ENCODE measurements at regions of chr10 and their contacts with region 1.

Region 1: DNA sequence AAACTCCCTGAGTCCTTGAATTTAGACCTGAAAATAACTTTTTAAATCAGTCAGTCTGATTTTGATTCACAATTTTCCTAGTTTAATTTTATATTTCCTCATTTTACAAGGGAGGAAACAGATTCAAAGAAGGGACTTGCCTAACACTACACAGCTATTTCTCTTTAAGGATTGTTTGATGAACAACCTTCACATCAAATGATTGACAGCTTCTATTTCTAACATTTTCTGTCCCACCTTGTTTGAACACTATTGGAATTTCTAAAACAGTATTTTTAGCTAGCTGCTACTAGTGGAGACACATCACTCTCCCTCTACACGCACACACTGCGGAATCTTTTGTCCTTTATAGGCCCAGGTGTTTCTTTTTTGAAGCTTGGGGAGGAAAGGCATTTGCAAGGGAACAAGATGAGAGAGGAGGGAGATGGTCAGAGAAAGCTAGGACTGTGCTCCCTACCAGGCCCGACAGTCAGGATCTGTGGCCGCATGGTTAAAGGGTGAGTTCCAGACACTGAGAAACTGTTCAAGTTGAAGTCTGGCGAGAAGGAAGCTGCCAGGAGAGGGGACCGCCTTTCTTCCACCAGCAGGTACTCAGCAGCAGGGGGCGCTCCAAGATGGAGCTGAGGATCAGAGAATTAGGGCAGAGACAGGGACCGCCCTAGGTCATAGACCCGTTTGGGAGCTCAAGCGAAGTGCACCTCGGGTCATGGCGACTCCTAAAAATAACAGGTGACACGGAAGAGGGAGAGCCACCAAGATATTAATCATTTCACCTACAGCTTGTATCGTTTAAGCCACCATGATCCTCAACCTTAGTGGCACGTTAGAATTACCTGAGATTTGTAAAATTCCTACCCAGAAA is 49.7 kb downstream of the DNAJC12 start:
- DNase-seq: peak; percentile 92
- ATAC-seq: peak; percentile 97
- H3K4me3 Mint-ChIP-seq: peak overlapping the region; percentile 25; the same call in 1 of the 2 replicates
- H3K27ac Mint-ChIP-seq: no peak overlapping the region
- H3K4me1 Mint-ChIP-seq: peaks cover 34% of the 10 kb centered on the region
- H3K27me3 Mint-ChIP-seq: no peaks in the 10 kb centered on the region; the same call in 1 of the 2 replicates
- CTCF ChIP-seq: peak; percentile 87

Region 2: DNA sequence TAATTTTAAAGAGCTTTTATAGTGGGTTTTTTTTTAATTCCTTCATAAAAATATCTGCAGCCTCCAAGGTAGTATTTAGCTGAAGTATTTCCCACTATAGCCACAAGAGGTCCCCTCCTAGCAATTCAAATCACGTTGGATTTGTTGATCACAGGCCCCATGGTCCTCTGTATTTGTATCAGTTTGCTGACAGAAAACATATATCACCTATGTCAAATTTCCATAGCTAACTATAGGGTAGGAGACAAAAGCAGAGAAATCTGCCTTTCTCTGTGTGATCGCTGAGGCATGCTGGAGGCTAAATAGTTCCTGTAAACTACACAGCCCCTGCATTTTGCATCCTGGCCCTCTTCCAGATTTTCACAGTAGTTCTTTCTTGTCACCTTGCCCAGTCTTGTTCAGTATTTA is 90.5 kb before region 1 on chr10:
- CTCF ChIA-PET with region 1: interaction called, 11 read pairs
- POLR2A ChIA-PET with region 1: no interaction called
- DNase-seq: no peak
- ATAC-seq: peak; percentile 87
- H3K4me3 Mint-ChIP-seq: no peak overlapping the region
- H3K27ac Mint-ChIP-seq: no peak overlapping the region
- H3K4me1 Mint-ChIP-seq: peaks cover 4% of the 10 kb centered on the region
- H3K27me3 Mint-ChIP-seq: peaks cover 5% of the 10 kb centered on the region; the same call in 1 of the 2 replicates
- CTCF ChIP-seq: peak; percentile 50

Region 3: GRCh38 chr10:67803588-67804394 is 15.5 kb after region 1 on chr10:
- CTCF ChIA-PET with region 1: interaction called, 19 read pairs
- POLR2A ChIA-PET with region 1: no interaction called
- DNase-seq: no peak
- ATAC-seq: no peak
- H3K4me3 Mint-ChIP-seq: no peak overlapping the region
- H3K27ac Mint-ChIP-seq: no peak overlapping the region
- H3K4me1 Mint-ChIP-seq: peaks cover 16% of the 10 kb centered on the region
- H3K27me3 Mint-ChIP-seq: no peaks in the 10 kb centered on the region
- CTCF ChIP-seq: no peak

Region 4: GRCh38 chr10:67861750-67862460 is 73.6 kb after region 1 on chr10:
- CTCF ChIA-PET with region 1: interaction called, 15 read pairs
- POLR2A ChIA-PET with region 1: no interaction called
- DNase-seq: peak; percentile 38
- ATAC-seq: peak; percentile 89
- H3K4me3 Mint-ChIP-seq: peak overlapping the region; percentile 55
- H3K27ac Mint-ChIP-seq: peak overlapping the region; percentile 95
- H3K4me1 Mint-ChIP-seq: peaks cover 48% of the 10 kb centered on the region
- H3K27me3 Mint-ChIP-seq: no peaks in the 10 kb centered on the region
- CTCF ChIP-seq: no peak

Region 5: GRCh38 chr10:68052463-68052862 is 264.2 kb after region 1 on chr10:
- CTCF ChIA-PET with region 1: no interaction called
- POLR2A ChIA-PET with region 1: no interaction called
- DNase-seq: no peak
- ATAC-seq: no peak
- H3K4me3 Mint-ChIP-seq: no peak overlapping the region
- H3K27ac Mint-ChIP-seq: no peak overlapping the region
- H3K4me1 Mint-ChIP-seq: peaks cover 11% of the 10 kb centered on the region
- H3K27me3 Mint-ChIP-seq: no peaks in the 10 kb centered on the region
- CTCF ChIP-seq: no peak

Region 6: GRCh38 chr10:68156373-68157185 is 368.3 kb after region 1 on chr10:
- CTCF ChIA-PET with region 1: interaction called, 25 read pairs
- POLR2A ChIA-PET with region 1: no interaction called
- DNase-seq: peak; percentile 62
- ATAC-seq: peak; percentile 52
- H3K4me3 Mint-ChIP-seq: no peak overlapping the region
- H3K27ac Mint-ChIP-seq: no peak overlapping the region
- H3K4me1 Mint-ChIP-seq: peaks cover 42% of the 10 kb centered on the region
- H3K27me3 Mint-ChIP-seq: no peaks in the 10 kb centered on the region
- CTCF ChIP-seq: peak; percentile 63

Region 7: GRCh38 chr10:68208424-68209042 is 420.3 kb after region 1 on chr10:
- CTCF ChIA-PET with region 1: interaction called, 11 read pairs
- POLR2A ChIA-PET with region 1: no interaction called
- DNase-seq: peak; percentile 82
- ATAC-seq: peak; percentile 98
- H3K4me3 Mint-ChIP-seq: no peak overlapping the region
- H3K27ac Mint-ChIP-seq: no peak overlapping the region
- H3K4me1 Mint-ChIP-seq: peaks cover 6% of the 10 kb centered on the region; the same call in 1 of the 2 replicates
- H3K27me3 Mint-ChIP-seq: no peaks in the 10 kb centered on the region; the same call in 1 of the 2 replicates
- CTCF ChIP-seq: no peak

Measured in WTC11 (cell line).